CD4-positive, alpha-beta memory T cell (primary cell): ENCODE measurements at regions of chr19 and their contacts with region 1.

Region 1: DNA sequence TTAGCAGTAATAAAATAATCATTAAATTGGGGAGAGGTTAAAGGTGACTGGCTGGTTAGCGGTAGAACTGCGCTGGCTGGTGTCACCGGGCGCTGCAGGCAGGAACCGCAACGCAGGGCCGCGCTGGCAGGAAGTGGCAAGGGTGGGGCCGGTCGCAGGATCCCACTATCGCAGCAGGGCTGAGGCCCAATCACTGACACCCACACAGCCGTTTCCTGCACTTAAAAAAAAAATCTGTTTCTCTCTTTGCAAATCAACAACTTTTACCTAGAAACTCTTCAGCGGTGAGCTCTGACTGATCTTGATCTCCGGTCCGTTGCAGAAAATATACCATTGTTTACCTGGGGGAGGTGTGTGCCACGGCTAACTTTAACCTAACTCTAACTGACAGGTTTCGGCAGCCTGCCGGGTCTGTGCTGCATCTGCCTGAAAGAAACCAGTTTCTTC is 46.9 kb downstream of the KLF2 start:
- DNase-seq: peak; percentile 95 to 97 (median 95)
- H3K4me3 ChIP-seq: peak overlapping the region in 1 of 2 donors; percentile 47
- H3K4me3 Mint-ChIP-seq: no peak overlapping the region
- H3K27ac ChIP-seq: peak overlapping the region; percentile 89
- H3K27ac Mint-ChIP-seq: no peak overlapping the region
- H3K4me1 ChIP-seq: peaks cover 98% of the 10 kb centered on the region
- H3K4me1 Mint-ChIP-seq: peaks cover 0 to 60% (median 31%) of the 10 kb centered on the region in 4 donors
- H3K27me3 ChIP-seq: no peaks in the 10 kb centered on the region
- H3K27me3 Mint-ChIP-seq: no peaks in the 10 kb centered on the region

Region 2: DNA sequence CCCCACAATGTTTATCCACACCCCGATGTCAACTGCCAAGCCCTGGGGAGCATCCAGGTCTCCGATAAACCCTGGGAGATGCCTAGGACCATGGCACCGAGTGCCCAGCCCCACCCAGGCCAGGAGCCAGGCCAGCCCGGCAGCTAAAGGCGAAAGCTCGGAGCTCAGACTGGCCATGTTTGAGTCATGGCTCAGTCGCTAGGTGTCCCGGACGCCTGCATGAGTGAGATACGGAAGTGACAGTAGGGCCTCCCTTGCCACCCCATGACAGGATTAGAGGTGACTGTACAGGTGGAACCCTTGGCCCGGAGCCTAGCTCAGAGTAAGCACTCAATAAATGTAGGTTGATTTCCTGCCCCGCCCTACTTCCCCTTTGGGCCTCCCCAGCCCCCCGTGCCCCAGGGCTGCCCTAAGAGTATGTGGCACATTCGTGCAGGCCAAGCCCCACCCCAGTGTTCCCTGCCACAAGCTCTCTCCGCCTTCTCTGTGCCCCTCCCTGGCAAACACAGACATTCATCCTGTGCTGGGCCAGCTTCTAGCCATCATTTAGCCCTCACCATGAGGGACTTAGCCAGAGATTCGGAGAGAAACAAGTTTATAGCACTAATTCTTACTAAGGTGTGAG is 301.1 kb before region 1 on chr19:
- CTCF ChIA-PET with region 1: no interaction called
- POLR2A ChIA-PET with region 1: interaction called, 12 read pairs
- intact Hi-C with region 1: no loop called
- DNase-seq: peak; percentile 87 to 98 (median 94)
- H3K4me3 ChIP-seq: peak overlapping the region in 1 of 2 donors; percentile 46
- H3K4me3 Mint-ChIP-seq: peak overlapping the region in 3 of 8 donors; percentile 60 to 80 (median 77)
- H3K27ac ChIP-seq: peak overlapping the region; percentile 89
- H3K27ac Mint-ChIP-seq: no peak overlapping the region
- H3K4me1 ChIP-seq: peaks cover 78% of the 10 kb centered on the region
- H3K4me1 Mint-ChIP-seq: peaks cover 25 to 46% (median 38%) of the 10 kb centered on the region in 4 donors
- H3K27me3 ChIP-seq: no peaks in the 10 kb centered on the region
- H3K27me3 Mint-ChIP-seq: no peaks in the 10 kb centered on the region

Region 3: DNA sequence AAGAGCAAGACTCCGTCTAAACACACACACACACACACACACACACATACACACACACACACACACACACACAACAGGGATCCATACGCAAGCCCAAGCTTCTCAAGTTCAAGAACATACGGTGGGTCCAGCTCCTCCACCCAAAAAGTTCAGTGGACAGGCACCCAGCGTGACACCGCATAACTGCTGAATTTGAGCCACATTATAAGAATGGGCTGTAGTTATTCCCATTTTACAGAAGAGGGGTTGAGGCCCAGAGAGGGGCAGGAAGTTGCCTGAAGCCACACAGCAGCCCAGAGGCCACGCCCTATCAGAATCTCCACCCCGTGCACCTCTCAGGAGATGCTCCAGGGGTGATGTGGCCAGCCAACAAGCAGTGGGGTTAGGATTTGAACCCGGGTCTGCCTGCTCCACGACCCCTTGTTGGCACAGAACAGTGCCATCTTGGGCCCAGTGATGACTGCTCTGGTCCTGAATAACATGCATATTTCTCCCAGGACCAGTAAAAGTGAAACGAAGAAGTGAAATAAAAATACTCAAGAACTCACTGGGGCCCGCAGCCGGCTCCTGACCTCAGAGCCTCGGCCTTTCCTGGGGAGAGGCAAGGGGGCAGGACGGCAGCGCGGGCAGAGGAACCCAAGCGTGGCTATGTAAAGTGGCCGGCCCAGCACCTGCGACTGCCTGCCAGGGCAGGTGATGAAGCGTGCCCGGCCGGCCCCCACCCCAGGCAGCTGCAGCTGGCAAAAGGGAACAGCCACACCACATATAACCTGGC is 112.0 kb before region 1 on chr19:
- CTCF ChIA-PET with region 1: no interaction called
- POLR2A ChIA-PET with region 1: interaction called, 15 read pairs
- intact Hi-C with region 1: no loop called
- DNase-seq: no peak
- H3K4me3 ChIP-seq: no peak overlapping the region
- H3K4me3 Mint-ChIP-seq: peak overlapping the region in 5 of 8 donors; percentile 2 to 62 (median 18)
- H3K27ac ChIP-seq: no peak overlapping the region
- H3K27ac Mint-ChIP-seq: peak overlapping the region in 2 of 7 donors; percentile 84 to 86
- H3K4me1 ChIP-seq: peaks cover 59% of the 10 kb centered on the region
- H3K4me1 Mint-ChIP-seq: peaks cover 23 to 70% (median 44%) of the 10 kb centered on the region in 4 donors
- H3K27me3 ChIP-seq: no peaks in the 10 kb centered on the region
- H3K27me3 Mint-ChIP-seq: no peaks in the 10 kb centered on the region

Region 4: DNA sequence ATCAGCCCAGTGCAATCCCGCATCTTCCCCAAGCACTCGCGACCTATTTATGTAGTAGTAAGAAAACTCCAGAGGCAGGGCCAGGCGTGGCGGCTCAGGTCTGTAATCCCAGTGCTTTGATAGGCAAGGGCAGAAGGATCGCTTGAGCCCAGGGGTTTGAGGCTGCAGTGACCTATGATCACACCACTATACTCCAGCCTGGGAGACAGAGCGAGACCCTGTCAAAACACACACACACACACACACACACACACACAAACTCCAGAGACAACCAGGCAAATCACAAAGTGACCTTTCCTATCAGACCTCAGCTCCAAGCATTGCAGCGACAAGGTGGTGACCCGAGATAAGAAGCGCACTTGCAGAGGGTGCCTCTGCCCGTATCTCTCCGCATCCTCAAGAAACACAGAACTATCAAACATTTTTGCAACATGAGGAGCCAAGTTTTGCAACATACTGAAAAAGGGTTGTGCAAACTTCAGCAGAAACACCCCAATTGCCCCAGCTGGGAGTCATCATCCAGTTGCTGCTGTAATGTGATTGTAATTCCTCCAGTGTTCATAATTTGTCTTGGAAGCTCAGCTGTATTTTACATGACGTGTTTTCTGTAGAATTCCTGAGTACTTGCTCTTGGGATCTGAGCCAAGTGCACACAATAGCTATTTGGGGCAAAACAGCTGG is 55.6 kb before region 1 on chr19:
- CTCF ChIA-PET with region 1: no interaction called
- POLR2A ChIA-PET with region 1: interaction called, 6,478 read pairs
- intact Hi-C with region 1: no loop called
- DNase-seq: no peak
- H3K4me3 ChIP-seq: no peak overlapping the region
- H3K4me3 Mint-ChIP-seq: no peak overlapping the region
- H3K27ac ChIP-seq: no peak overlapping the region
- H3K27ac Mint-ChIP-seq: peak overlapping the region in 3 of 7 donors; percentile 9 to 55 (median 34)
- H3K4me1 ChIP-seq: peaks cover 13% of the 10 kb centered on the region
- H3K4me1 Mint-ChIP-seq: peaks cover 5 to 15% (median 10%) of the 10 kb centered on the region in 4 donors
- H3K27me3 ChIP-seq: no peaks in the 10 kb centered on the region
- H3K27me3 Mint-ChIP-seq: no peaks in the 10 kb centered on the region

Region 5: GRCh38 chr19:16351133-16351809 is 20.3 kb before region 1 on chr19:
- CTCF ChIA-PET with region 1: interaction called, 4 read pairs
- POLR2A ChIA-PET with region 1: interaction called, 6,478 read pairs
- intact Hi-C with region 1: loop called (anchors 2 kb)
- DNase-seq: peak in 1 of 5 donors; percentile 28
- H3K4me3 ChIP-seq: peak overlapping the region in 1 of 2 donors; percentile 8
- H3K4me3 Mint-ChIP-seq: peak overlapping the region; percentile 56 to 78 (median 72)
- H3K27ac ChIP-seq: no peak overlapping the region
- H3K27ac Mint-ChIP-seq: peak overlapping the region in 6 of 7 donors; percentile 58 to 89 (median 81)
- H3K4me1 ChIP-seq: peaks cover 48% of the 10 kb centered on the region
- H3K4me1 Mint-ChIP-seq: peaks cover 22 to 61% (median 41%) of the 10 kb centered on the region in 4 donors
- H3K27me3 ChIP-seq: no peaks in the 10 kb centered on the region
- H3K27me3 Mint-ChIP-seq: no peaks in the 10 kb centered on the region

Region 6: GRCh38 chr19:16571283-16571682 is 199.7 kb after region 1 on chr19:
- CTCF ChIA-PET with region 1: no interaction called
- POLR2A ChIA-PET with region 1: no interaction called
- intact Hi-C with region 1: no loop called
- DNase-seq: no peak
- H3K4me3 ChIP-seq: peak overlapping the region; percentile 65 to 79
- H3K4me3 Mint-ChIP-seq: peak overlapping the region; percentile 76 to 88 (median 82)
- H3K27ac ChIP-seq: peak overlapping the region; percentile 76
- H3K27ac Mint-ChIP-seq: peak overlapping the region; percentile 72 to 92 (median 87)
- H3K4me1 ChIP-seq: peaks cover 67% of the 10 kb centered on the region
- H3K4me1 Mint-ChIP-seq: peaks cover 38 to 83% (median 62%) of the 10 kb centered on the region in 4 donors
- H3K27me3 ChIP-seq: no peaks in the 10 kb centered on the region
- H3K27me3 Mint-ChIP-seq: no peaks in the 10 kb centered on the region

Region 7: GRCh38 chr19:16649734-16650133 is 278.2 kb after region 1 on chr19:
- CTCF ChIA-PET with region 1: no interaction called
- POLR2A ChIA-PET with region 1: no interaction called
- intact Hi-C with region 1: no loop called
- DNase-seq: no peak
- H3K4me3 ChIP-seq: no peak overlapping the region
- H3K4me3 Mint-ChIP-seq: no peak overlapping the region
- H3K27ac ChIP-seq: no peak overlapping the region
- H3K27ac Mint-ChIP-seq: peak overlapping the region in 5 of 7 donors; percentile 4 to 81 (median 24)
- H3K4me1 ChIP-seq: no peaks in the 10 kb centered on the region
- H3K4me1 Mint-ChIP-seq: peaks cover 0 to 37% (median 13%) of the 10 kb centered on the region in 4 donors
- H3K27me3 ChIP-seq: no peaks in the 10 kb centered on the region
- H3K27me3 Mint-ChIP-seq: no peaks in the 10 kb centered on the region